T-cell (primary cell): ENCODE measurements at regions of chr6 and their contacts with region 1.

Region 1: GRCh38 chr6:41721414-41721813 is 14.0 kb downstream of the TFEB start:
- DNase-seq: no peak
- ATAC-seq: no peak
- H3K4me3 ChIP-seq: no peak overlapping the region
- H3K4me3 Mint-ChIP-seq: no peak overlapping the region
- H3K27ac ChIP-seq: no peak overlapping the region
- H3K27ac Mint-ChIP-seq: no peak overlapping the region
- H3K4me1 ChIP-seq: peaks cover 14 to 28% of the 10 kb centered on the region in 2 experiments
- H3K4me1 Mint-ChIP-seq: peaks cover 11 to 57% (median 14%) of the 10 kb centered on the region in 3 donors
- H3K27me3 ChIP-seq: no peaks in the 10 kb centered on the region
- H3K27me3 Mint-ChIP-seq: no peaks in the 10 kb centered on the region

Region 2: GRCh38 chr6:41663563-41663962 is 57.9 kb before region 1 on chr6:
- CTCF ChIA-PET with region 1: no interaction called
- POLR2A ChIA-PET with region 1: no interaction called
- DNase-seq: no peak
- ATAC-seq: no peak
- H3K4me3 ChIP-seq: no peak overlapping the region
- H3K4me3 Mint-ChIP-seq: no peak overlapping the region
- H3K27ac ChIP-seq: no peak overlapping the region
- H3K27ac Mint-ChIP-seq: no peak overlapping the region
- H3K4me1 ChIP-seq: no peaks in the 10 kb centered on the region
- H3K4me1 Mint-ChIP-seq: no peaks in the 10 kb centered on the region
- H3K27me3 ChIP-seq: peaks cover 0 to 30% of the 10 kb centered on the region in 2 experiments
- H3K27me3 Mint-ChIP-seq: peaks cover 21 to 29% of the 10 kb centered on the region in 2 donors

Region 3: GRCh38 chr6:41741625-41742489 is 20.4 kb after region 1 on chr6:
- CTCF ChIA-PET with region 1: no interaction called
- POLR2A ChIA-PET with region 1: no interaction called
- DNase-seq: no peak
- ATAC-seq: no peak
- H3K4me3 ChIP-seq: no peak overlapping the region
- H3K4me3 Mint-ChIP-seq: no peak overlapping the region
- H3K27ac ChIP-seq: no peak overlapping the region
- H3K27ac Mint-ChIP-seq: no peak overlapping the region
- H3K4me1 ChIP-seq: no peaks in the 10 kb centered on the region
- H3K4me1 Mint-ChIP-seq: no peaks in the 10 kb centered on the region
- H3K27me3 ChIP-seq: peaks cover 0 to 13% of the 10 kb centered on the region in 2 experiments
- H3K27me3 Mint-ChIP-seq: no peaks in the 10 kb centered on the region

Region 4: DNA sequence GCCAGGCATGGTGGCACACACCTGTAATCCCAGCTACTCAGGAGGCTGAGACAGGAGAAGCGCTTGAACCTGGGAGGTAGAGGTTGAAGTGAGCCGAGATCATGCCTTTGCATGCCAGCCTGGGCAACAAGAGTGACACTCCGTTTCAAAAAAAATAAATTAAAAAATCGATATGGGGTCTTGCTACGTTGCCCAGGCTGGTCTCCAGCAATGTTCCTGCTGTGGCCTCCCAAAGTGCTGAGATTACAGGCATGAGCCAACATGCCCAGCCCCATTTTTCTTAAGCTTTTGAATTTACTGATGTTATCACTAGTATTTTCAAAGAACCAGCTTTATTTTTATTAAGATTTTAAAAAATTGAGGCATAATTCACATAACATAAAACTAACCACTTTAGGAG is 1819.1 kb after region 1 on chr6:
- CTCF ChIA-PET with region 1: no interaction called
- POLR2A ChIA-PET with region 1: interaction called in 1 of 2 experiments, 11 read pairs
- DNase-seq: no peak
- ATAC-seq: no peak
- H3K4me3 ChIP-seq: no peak overlapping the region
- H3K4me3 Mint-ChIP-seq: no peak overlapping the region
- H3K27ac ChIP-seq: no peak overlapping the region
- H3K27ac Mint-ChIP-seq: no peak overlapping the region
- H3K4me1 ChIP-seq: peaks cover 0 to 9% of the 10 kb centered on the region in 2 experiments
- H3K4me1 Mint-ChIP-seq: peaks cover 0 to 2% (median 1%) of the 10 kb centered on the region in 3 donors
- H3K27me3 ChIP-seq: no peaks in the 10 kb centered on the region
- H3K27me3 Mint-ChIP-seq: no peaks in the 10 kb centered on the region